ENCODE measurements at regions of chr15 and their contacts with region 1.

Region 1: GRCh38 chr15:69636169-69636915 is 183.7 kb downstream of the RPLP1 start:
- DNase-seq: no peak
- H3K4me3 ChIP-seq: no peak overlapping the region
- H3K27ac ChIP-seq: no peak overlapping the region
- H3K4me1 ChIP-seq: no peaks in the 10 kb centered on the region
- H3K27me3 ChIP-seq: peaks cover 70% of the 10 kb centered on the region
- CTCF ChIP-seq: no peak

Region 2: GRCh38 chr15:69535101-69535638 is 101.2 kb before region 1 on chr15:
- CTCF ChIA-PET with region 1: no interaction called
- POLR2A ChIA-PET with region 1: no interaction called
- intact Hi-C with region 1: no loop called
- DNase-seq: no peak
- H3K4me3 ChIP-seq: no peak overlapping the region
- H3K27ac ChIP-seq: no peak overlapping the region
- H3K4me1 ChIP-seq: peaks cover 35% of the 10 kb centered on the region
- H3K27me3 ChIP-seq: no peaks in the 10 kb centered on the region
- CTCF ChIP-seq: no peak

Region 3: GRCh38 chr15:69593981-69594966 is 42.1 kb before region 1 on chr15:
- CTCF ChIA-PET with region 1: no interaction called
- POLR2A ChIA-PET with region 1: no interaction called
- intact Hi-C with region 1: loop called (anchors 5 kb)
- DNase-seq: peak; percentile 8
- H3K4me3 ChIP-seq: no peak overlapping the region
- H3K27ac ChIP-seq: no peak overlapping the region
- H3K4me1 ChIP-seq: no peaks in the 10 kb centered on the region
- H3K27me3 ChIP-seq: peaks cover 4% of the 10 kb centered on the region
- CTCF ChIP-seq: no peak

Measured in A673 (cell line).